SK-N-SH (cell line): ENCODE measurements at regions of chr12 and their contacts with region 1.

Region 1: DNA sequence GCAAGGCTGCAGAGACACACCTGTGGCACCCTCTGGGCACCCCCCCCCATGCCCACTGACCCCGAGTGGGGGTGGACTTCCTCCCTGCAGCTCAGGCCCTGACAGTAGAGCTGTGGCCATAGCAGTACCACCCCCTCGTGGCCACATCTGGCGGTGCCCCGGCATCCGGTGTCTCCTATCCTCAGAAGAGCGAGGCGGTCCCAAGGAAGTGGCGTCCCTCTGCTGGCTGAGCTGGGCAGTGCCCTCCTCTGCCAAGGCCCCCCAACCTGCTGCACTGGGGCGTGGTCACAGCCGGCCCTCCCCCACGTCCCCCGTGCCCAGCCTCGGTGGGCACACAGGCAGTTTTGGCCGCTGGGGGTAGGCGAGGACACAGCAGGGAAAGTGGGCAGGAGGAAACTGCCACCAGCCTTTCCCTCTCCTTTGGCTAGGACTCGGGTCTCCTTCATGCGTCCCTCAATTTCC is 6.0 kb upstream of the SLC6A12 start:
- DNase-seq: peak; percentile 91
- H3K4me3 ChIP-seq: no peak overlapping the region; a peak in 1 of 4 replicates
- H3K27ac ChIP-seq: no peak overlapping the region
- H3K4me1 ChIP-seq: peaks cover 0 to 2% of the 10 kb centered on the region in 2 experiments; a peak in 1 of 4 replicates
- H3K27me3 ChIP-seq: no peaks in the 10 kb centered on the region
- CTCF ChIP-seq: peak; percentile 68
- EP300 ChIP-seq: no peak
- RAD21 ChIP-seq: peak; percentile 78

Region 2: GRCh38 chr12:188910-189621 is 30.9 kb before region 1 on chr12:
- CTCF ChIA-PET with region 1: interaction called, 11 read pairs
- POLR2A ChIA-PET with region 1: no interaction called
- DNase-seq: peak; percentile 96
- H3K4me3 ChIP-seq: peak overlapping the region; percentile 43 to 56
- H3K27ac ChIP-seq: no peak overlapping the region
- H3K4me1 ChIP-seq: peaks cover 0 to 22% of the 10 kb centered on the region in 2 experiments; a peak in 1 of 4 replicates
- H3K27me3 ChIP-seq: peaks cover 5% of the 10 kb centered on the region
- CTCF ChIP-seq: peak; percentile 74
- EP300 ChIP-seq: no peak
- RAD21 ChIP-seq: peak; percentile 60

Region 3: DNA sequence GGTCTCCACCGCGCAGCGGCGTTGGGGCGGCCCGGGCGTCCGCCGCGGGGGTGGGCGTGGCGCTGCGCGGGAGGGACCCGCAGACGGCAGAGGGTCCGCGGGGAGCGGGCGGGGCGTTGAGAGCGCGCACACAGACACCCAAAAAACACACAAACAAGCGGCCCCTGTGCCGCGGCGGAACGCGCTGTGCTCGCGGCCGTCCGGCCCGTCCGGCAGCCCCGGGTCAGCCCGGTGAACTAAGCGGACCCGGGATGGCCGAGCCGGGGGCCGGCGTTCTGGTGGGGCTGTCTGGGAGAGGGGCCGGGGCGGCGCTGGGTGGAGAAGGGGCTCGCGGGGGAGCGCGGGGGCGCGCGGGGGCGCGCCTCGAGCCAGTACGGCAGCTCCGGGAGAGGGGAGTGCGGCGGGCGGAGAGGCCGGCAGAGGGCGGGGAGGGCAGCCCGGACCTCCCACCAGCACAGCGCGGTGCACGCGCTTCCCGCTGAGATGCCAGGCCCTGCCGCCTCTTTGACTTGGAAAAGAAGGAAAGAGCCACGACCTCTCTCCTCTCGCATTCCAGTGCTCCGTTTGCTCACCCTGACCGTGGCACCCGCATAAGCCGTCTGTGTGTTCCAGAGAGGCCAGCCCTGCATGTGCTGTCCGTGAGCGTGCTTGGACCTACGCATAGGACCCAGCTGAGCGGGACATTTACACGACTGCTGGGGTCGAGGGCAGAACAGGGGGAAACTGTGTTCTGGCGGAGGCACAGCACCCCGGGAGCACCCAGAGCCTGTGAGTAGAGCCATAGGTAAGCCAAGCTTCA is 16.3 kb before region 1 on chr12:
- CTCF ChIA-PET with region 1: interaction called, 13 read pairs
- POLR2A ChIA-PET with region 1: no interaction called
- DNase-seq: peak; percentile 93
- H3K4me3 ChIP-seq: peak overlapping the region; percentile 39 to 48
- H3K27ac ChIP-seq: no peak overlapping the region
- H3K4me1 ChIP-seq: peaks cover 0 to 17% of the 10 kb centered on the region in 2 experiments; a peak in 2 of 4 replicates
- H3K27me3 ChIP-seq: peaks cover 28% of the 10 kb centered on the region; the same call in 1 of the 2 replicates
- CTCF ChIP-seq: no peak; the same call in 1 of the 2 replicates
- EP300 ChIP-seq: no peak
- RAD21 ChIP-seq: no peak

Region 4: DNA sequence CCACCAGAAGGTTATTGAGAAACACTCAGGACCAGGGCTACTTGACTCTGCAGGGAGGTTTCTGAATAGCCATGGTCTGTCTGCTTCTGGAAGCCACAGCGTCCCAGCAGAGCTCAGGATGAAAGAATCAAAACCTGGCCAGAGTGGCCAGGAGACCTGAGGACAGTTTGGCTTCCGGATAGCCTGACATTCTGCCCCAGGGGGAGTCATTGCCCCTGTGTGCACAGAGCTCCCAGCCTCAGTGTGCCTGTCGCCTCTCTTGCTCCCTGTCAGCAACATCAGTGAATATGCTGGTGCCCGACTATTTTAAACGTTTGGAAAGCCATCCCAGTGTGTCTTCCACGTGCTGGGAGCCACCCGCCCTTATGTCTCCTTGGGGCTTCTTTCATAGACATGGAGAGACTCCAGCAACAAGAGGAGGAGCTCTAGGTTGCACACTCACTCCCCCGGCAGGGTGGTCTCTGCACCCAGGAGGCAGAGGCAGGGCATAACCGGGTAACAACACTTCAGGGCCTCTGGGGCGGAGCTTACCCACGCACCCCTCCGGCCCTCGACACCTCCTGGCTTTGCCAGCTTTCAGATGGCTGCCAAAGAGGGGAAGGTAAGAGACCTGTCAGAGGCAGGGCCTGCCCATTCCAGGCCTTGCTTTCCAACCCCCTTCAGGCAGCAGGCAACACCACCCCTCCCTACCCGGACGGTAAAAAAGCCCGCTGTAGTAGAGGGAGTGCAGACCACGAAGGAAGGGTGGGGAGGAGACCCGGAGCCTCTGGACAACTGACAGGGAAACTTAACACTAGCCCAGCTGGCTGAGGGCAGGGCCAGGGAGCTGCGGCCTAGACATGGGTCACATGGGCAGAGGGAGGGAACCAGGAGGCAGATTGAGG is 13.1 kb after region 1 on chr12:
- CTCF ChIA-PET with region 1: interaction called, 13 read pairs
- POLR2A ChIA-PET with region 1: no interaction called
- DNase-seq: no peak
- H3K4me3 ChIP-seq: no peak overlapping the region
- H3K27ac ChIP-seq: no peak overlapping the region
- H3K4me1 ChIP-seq: no peaks in the 10 kb centered on the region; a peak in 1 of 4 replicates
- H3K27me3 ChIP-seq: peaks cover 5% of the 10 kb centered on the region; the same call in 1 of the 2 replicates
- CTCF ChIP-seq: no peak
- EP300 ChIP-seq: no peak
- RAD21 ChIP-seq: no peak

Region 5: GRCh38 chr12:257521-258321 is 37.8 kb after region 1 on chr12:
- CTCF ChIA-PET with region 1: interaction called, 12 read pairs
- POLR2A ChIA-PET with region 1: no interaction called
- DNase-seq: no peak
- H3K4me3 ChIP-seq: no peak overlapping the region
- H3K27ac ChIP-seq: no peak overlapping the region
- H3K4me1 ChIP-seq: no peaks in the 10 kb centered on the region
- H3K27me3 ChIP-seq: no peaks in the 10 kb centered on the region; the same call in 1 of the 2 replicates
- CTCF ChIP-seq: no peak
- EP300 ChIP-seq: no peak
- RAD21 ChIP-seq: no peak

Region 6: GRCh38 chr12:578748-579449 is 359.0 kb after region 1 on chr12:
- CTCF ChIA-PET with region 1: no interaction called
- POLR2A ChIA-PET with region 1: no interaction called
- DNase-seq: no peak
- H3K4me3 ChIP-seq: no peak overlapping the region
- H3K27ac ChIP-seq: no peak overlapping the region
- H3K4me1 ChIP-seq: peaks cover 0 to 22% of the 10 kb centered on the region in 2 experiments; a peak in 2 of 4 replicates
- H3K27me3 ChIP-seq: no peaks in the 10 kb centered on the region
- CTCF ChIP-seq: no peak
- EP300 ChIP-seq: no peak
- RAD21 ChIP-seq: no peak